Astrocyte of the cerebellum (primary cell): ENCODE measurements at regions of chr6 and their contacts with region 1.

Region 1: DNA sequence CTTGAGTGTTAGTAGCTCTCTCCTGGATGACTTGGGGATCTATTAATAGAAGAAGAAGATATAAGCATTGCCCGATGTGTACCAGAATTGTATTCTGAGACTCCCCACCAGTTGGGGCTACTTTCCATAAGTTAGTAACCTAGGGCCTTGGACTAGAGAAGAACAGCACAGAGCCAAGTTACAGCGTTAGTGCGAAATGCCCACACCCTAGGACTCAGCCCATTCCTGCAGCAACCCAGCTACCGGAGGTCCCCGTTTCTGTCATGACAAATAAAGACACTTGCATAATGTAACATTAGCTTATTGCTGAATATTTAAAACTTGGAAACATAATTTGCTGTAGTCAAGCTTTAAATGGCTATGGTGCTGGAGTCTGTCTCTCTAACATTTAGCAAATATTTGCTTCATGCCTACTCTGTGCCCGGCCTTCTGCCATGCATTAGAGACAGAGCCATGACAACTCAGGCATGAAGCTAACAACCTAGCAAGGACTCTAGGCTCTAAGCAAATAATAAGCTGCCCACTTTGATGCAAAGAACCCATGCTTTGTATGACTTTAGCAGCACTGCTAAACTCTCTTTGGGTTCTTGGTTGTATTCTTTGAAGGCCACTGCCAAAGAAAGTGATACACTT is 103.4 kb upstream of the COL21A1 start:
- DNase-seq: no peak
- H3K4me3 ChIP-seq: no peak overlapping the region
- CTCF ChIP-seq: no peak

Region 2: DNA sequence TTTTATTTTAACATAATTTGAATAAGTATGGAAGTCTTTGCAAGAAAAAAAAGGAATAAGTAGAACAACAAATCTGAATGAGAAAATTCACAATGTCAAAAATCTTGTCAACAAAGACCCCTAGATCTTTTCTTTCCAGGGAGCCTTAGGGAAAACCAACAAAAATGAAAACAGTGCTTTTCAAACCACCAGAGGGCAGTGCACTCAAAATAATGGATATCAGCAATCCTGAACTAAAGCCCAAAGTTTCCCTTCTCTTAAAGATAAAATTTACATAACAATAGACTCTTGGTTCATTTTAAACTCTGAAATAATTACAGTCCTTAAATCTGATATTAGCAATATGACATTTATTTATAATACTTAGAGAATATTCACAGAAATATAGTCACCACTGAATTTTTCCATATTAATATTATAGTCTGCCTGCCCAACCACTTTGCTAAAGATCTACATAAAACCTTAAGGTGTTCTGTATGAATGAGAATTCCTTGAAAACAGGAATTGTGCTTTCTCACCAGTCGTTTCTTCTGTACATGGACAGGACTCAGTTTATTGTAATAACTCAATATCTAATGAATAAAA is 370.0 kb before region 1 on chr6:
- in situ Hi-C with region 1: no loop called
- DNase-seq: peak; percentile 35
- H3K4me3 ChIP-seq: no peak overlapping the region
- CTCF ChIP-seq: peak; percentile 50

Region 3: GRCh38 chr6:56292505-56293181 is 58.1 kb before region 1 on chr6:
- in situ Hi-C with region 1: no loop called
- DNase-seq: peak; percentile 62
- H3K4me3 ChIP-seq: no peak overlapping the region
- CTCF ChIP-seq: peak; percentile 50

Region 4: GRCh38 chr6:56593801-56594318 is 243.1 kb after region 1 on chr6:
- in situ Hi-C with region 1: loop called (anchors 5 kb)
- DNase-seq: no peak
- H3K4me3 ChIP-seq: no peak overlapping the region
- CTCF ChIP-seq: no peak